Activated B cell treated with CpG ODN at 0.5 μM for 24 hours (primary cell): ENCODE measurements at regions of chr2 and their contacts with region 1.

Region 1: GRCh38 chr2:217886720-217887309 is 116.0 kb downstream of the TNS1 start:
- DNase-seq: peak; percentile 47
- ATAC-seq: peak; percentile 71
- H3K4me3 Mint-ChIP-seq: no peak overlapping the region
- H3K27ac Mint-ChIP-seq: no peak overlapping the region
- H3K4me1 Mint-ChIP-seq: peaks cover 18% of the 10 kb centered on the region
- H3K27me3 Mint-ChIP-seq: no peaks in the 10 kb centered on the region
- CTCF ChIP-seq: peak; percentile 27

Region 2: GRCh38 chr2:217836901-217837491 is 49.8 kb before region 1 on chr2:
- CTCF ChIA-PET with region 1: no interaction called
- POLR2A ChIA-PET with region 1: no interaction called
- intact Hi-C with region 1: no loop called
- DNase-seq: no peak
- ATAC-seq: no peak
- H3K4me3 Mint-ChIP-seq: no peak overlapping the region
- H3K27ac Mint-ChIP-seq: no peak overlapping the region
- H3K4me1 Mint-ChIP-seq: no peaks in the 10 kb centered on the region
- H3K27me3 Mint-ChIP-seq: peaks cover 8% of the 10 kb centered on the region
- CTCF ChIP-seq: no peak

Region 3: GRCh38 chr2:217851191-217852020 is 35.4 kb before region 1 on chr2:
- CTCF ChIA-PET with region 1: no interaction called
- POLR2A ChIA-PET with region 1: no interaction called
- intact Hi-C with region 1: no loop called
- DNase-seq: no peak
- ATAC-seq: no peak
- H3K4me3 Mint-ChIP-seq: no peak overlapping the region
- H3K27ac Mint-ChIP-seq: no peak overlapping the region
- H3K4me1 Mint-ChIP-seq: no peaks in the 10 kb centered on the region
- H3K27me3 Mint-ChIP-seq: peaks cover 2% of the 10 kb centered on the region
- CTCF ChIP-seq: no peak

Region 4: DNA sequence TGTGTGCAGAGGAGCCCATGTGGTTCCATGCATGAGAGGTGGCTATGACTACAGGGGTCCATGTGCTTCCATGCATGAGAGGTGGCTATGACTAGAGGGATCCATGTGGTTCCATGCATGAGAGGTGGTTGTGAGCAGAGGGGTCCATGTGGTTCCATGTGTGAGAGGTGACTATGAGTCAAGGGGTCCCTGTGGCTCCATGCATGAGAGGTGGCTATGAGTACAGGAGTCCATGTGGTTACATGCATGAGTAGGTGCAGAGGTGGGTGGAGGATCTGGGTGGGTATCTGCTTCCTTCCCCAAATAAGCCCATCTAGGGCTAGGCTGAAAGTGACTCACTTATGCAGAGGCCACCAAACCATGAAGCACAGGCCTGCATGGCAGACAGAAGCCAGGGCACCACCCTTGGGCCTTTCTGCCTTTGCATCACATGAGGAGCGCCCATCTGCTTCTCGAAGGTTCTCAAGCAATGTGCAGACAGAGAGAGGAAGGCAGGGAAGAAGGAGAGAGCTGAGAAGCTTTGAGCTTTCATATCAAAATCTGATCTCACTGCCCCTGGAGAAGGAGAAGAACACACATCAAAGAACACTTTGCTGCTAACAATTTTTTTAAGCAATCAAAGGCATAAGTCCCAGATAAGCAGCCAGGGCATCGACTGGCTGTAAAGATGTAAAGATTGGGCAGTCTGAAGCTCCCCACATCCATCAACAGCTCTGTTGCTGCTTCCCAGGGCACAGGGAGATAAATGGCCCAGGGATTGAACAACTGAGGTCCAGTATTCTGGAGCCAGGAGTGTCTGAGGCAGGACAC is 21.6 kb before region 1 on chr2:
- CTCF ChIA-PET with region 1: interaction called, 11 read pairs
- POLR2A ChIA-PET with region 1: no interaction called
- intact Hi-C with region 1: no loop called
- DNase-seq: peak; percentile 31
- ATAC-seq: peak; percentile 93
- H3K4me3 Mint-ChIP-seq: peak overlapping the region; percentile 68
- H3K27ac Mint-ChIP-seq: peak overlapping the region; percentile 84
- H3K4me1 Mint-ChIP-seq: peaks cover 50% of the 10 kb centered on the region
- H3K27me3 Mint-ChIP-seq: peaks cover 3% of the 10 kb centered on the region
- CTCF ChIP-seq: no peak

Region 5: GRCh38 chr2:217988014-217988839 is 101.4 kb after region 1 on chr2:
- CTCF ChIA-PET with region 1: no interaction called
- POLR2A ChIA-PET with region 1: no interaction called
- intact Hi-C with region 1: loop called (anchors 2 kb)
- DNase-seq: peak; percentile 60
- ATAC-seq: peak; percentile 69
- H3K4me3 Mint-ChIP-seq: no peak overlapping the region
- H3K27ac Mint-ChIP-seq: no peak overlapping the region
- H3K4me1 Mint-ChIP-seq: peaks cover 2% of the 10 kb centered on the region
- H3K27me3 Mint-ChIP-seq: peaks cover 11% of the 10 kb centered on the region
- CTCF ChIP-seq: no peak

Region 6: GRCh38 chr2:218047536-218048225 is 160.9 kb after region 1 on chr2:
- CTCF ChIA-PET with region 1: no interaction called
- POLR2A ChIA-PET with region 1: no interaction called
- intact Hi-C with region 1: no loop called
- DNase-seq: no peak
- ATAC-seq: no peak
- H3K4me3 Mint-ChIP-seq: no peak overlapping the region
- H3K27ac Mint-ChIP-seq: no peak overlapping the region
- H3K4me1 Mint-ChIP-seq: peaks cover 7% of the 10 kb centered on the region
- H3K27me3 Mint-ChIP-seq: peaks cover 2% of the 10 kb centered on the region
- CTCF ChIP-seq: no peak

Region 7: DNA sequence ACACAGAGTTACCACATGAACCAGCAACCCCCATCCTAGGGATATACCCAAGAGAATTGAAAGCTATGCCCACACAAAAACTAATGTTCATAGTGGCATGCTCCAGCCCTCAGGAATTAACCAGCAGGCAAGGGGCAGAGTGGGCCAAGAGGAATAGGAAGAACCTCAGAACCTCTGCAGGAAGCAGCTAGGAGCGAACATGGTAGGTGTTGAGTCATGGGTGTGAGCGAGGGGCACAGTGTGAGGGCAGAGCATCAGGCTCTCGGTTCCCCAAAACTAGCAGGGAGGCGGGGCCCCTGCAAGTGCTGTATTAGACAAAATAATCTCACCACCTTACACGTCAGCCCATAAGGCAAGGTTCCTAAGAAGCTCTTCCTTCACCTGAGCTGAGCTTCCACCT is 176.7 kb after region 1 on chr2:
- CTCF ChIA-PET with region 1: no interaction called
- POLR2A ChIA-PET with region 1: no interaction called
- intact Hi-C with region 1: loop called (anchors 1 kb)
- DNase-seq: no peak
- ATAC-seq: peak; percentile 93
- H3K4me3 Mint-ChIP-seq: no peak overlapping the region
- H3K27ac Mint-ChIP-seq: no peak overlapping the region
- H3K4me1 Mint-ChIP-seq: peaks cover 14% of the 10 kb centered on the region
- H3K27me3 Mint-ChIP-seq: peaks cover 22% of the 10 kb centered on the region
- CTCF ChIP-seq: no peak